ENCODE measurements at regions of chr2 and their contacts with region 1.

Region 1: DNA sequence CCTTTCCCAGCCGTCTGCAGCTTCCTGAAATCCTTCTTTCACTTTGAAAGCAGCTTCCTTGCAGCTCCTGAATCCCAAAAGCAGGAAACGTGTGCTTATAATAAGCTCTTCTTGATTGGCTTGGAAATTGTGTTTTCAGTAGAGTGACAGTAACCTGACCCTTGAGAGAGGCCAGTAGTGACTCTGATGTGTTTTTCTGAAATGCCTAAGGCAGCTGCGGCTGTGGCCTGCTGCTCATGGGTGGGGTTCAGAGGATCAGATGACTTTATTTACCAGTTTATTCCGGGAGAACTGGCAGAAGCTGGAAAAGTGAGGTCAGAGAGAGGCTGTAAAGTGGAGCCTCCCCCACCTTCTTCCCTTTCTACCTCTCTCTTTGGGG is 31.9 kb upstream of the RPIA start:
- DNase-seq: peak; percentile 86
- ATAC-seq: peak; percentile 86
- H3K4me3 ChIP-seq: peak overlapping the region; percentile 12; the same call in 1 of the 2 replicates
- H3K27ac ChIP-seq: peak overlapping the region; percentile 55
- H3K4me1 ChIP-seq: peaks cover 41% of the 10 kb centered on the region
- H3K27me3 ChIP-seq: no peaks in the 10 kb centered on the region
- CTCF ChIP-seq: no peak

Region 2: GRCh38 chr2:88627056-88627855 is 32.3 kb before region 1 on chr2 and contains the start of gene EIF2AK3:
- CTCF ChIA-PET with region 1: no interaction called
- POLR2A ChIA-PET with region 1: interaction called, 4 read pairs
- intact Hi-C with region 1: loop called (anchors 1 kb)
- DNase-seq: peak; percentile 100
- ATAC-seq: peak; percentile 85
- H3K4me3 ChIP-seq: peak within 1 kb of the TSS; percentile 74
- H3K27ac ChIP-seq: peak within 1 kb of the TSS; percentile 88
- H3K4me1 ChIP-seq: peaks cover 22% of the 10 kb centered on the region
- H3K27me3 ChIP-seq: no peaks in the 10 kb centered on the region
- CTCF ChIP-seq: no peak
- total RNA-seq, gene EIF2AK3: 10.7 and 16.2 TPM in 2 replicates

Region 3: DNA sequence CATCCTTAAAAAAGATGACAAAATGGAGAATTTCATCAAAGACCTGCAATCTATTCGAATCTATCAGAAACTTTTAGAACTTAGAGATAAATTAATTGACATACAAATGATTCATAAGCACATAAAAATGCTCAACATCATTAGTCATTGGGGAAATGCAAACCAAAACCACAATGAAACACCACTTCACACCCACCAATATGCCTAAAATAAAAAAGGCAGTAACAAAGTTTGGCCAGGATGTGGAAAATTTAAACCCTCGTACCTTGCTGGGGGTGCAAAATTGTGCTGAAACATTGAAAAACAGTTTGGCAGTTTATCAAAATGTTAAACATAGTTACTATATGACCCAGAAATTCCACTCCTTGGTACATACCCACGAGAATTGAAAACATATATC is 20.8 kb before region 1 on chr2:
- CTCF ChIA-PET with region 1: no interaction called
- POLR2A ChIA-PET with region 1: no interaction called
- intact Hi-C with region 1: loop called (anchors 1 kb)
- DNase-seq: peak; percentile 80
- ATAC-seq: peak; percentile 80
- H3K4me3 ChIP-seq: no peak overlapping the region
- H3K27ac ChIP-seq: peak overlapping the region; percentile 8
- H3K4me1 ChIP-seq: peaks cover 21% of the 10 kb centered on the region
- H3K27me3 ChIP-seq: no peaks in the 10 kb centered on the region
- CTCF ChIP-seq: no peak